CD8-positive, alpha-beta T cell (primary cell): ENCODE measurements at regions of chr16 and their contacts with region 1.

Region 1: DNA sequence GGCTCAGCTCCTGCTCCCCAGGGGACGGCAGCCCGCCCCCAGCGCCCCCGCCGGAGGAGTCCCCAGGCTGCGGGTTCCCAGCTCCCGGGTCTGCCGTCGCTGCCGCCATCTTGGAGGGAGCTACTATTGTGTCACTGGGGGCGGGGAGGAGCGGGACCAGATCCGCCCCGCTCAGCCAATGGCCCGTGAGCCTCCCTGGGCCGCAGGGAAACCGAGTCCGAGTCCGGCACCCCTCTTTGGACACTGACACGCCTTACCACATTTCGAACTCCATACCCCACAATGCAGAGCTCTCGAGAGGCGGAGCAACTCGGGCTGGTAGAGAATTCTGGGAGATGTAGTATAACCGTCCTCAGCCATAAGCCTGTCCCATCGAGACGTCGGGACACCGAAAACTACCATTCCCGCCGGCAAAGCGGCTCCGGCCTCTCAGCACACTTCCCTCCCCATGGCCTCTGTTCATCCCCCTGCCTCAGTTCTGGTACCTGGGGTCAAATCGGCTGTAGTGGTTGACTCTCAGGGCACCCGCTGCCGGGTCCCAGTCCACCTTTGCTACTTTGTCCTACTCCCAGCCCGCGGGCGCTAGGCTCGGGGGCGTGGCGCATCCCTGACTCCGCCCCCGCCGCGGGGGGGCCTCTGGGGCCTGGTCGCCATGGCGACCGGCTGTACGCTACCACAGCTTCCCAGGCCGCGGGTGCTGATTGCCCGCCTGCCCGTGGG is at the starts of genes RANBP10 and TSNAXIP1:
- DNase-seq: peak; percentile 92 to 99 (median 94)
- ATAC-seq: peak; percentile 91
- H3K4me3 ChIP-seq: peak within 1 kb of the TSS; percentile 89 to 96
- H3K4me3 Mint-ChIP-seq: peak within 1 kb of the TSS; percentile 95
- H3K27ac ChIP-seq: peak within 1 kb of the TSS; percentile 77 to 85
- H3K27ac Mint-ChIP-seq: peak within 1 kb of the TSS; percentile 91
- H3K4me1 ChIP-seq: peaks cover 35% of the 10 kb centered on the region
- H3K4me1 Mint-ChIP-seq: peaks cover 44% of the 10 kb centered on the region
- H3K27me3 ChIP-seq: no peaks in the 10 kb centered on the region
- H3K27me3 Mint-ChIP-seq: no peaks in the 10 kb centered on the region
- CTCF ChIP-seq: no peak
- total RNA-seq, gene RANBP10: 14.6 to 14.8 TPM
- total RNA-seq, gene TSNAXIP1: 0.31 to 0.41 TPM

Region 2: GRCh38 chr16:67660564-67661028 is 146.0 kb before region 1 on chr16 and contains the start of gene PARD6A:
- CTCF ChIA-PET with region 1: no interaction called
- POLR2A ChIA-PET with region 1: no interaction called
- intact Hi-C with region 1: loop called (anchors 1 kb)
- DNase-seq: peak; percentile 89 to 99 (median 95)
- ATAC-seq: peak; percentile 76
- H3K4me3 ChIP-seq: peak within 1 kb of the TSS; percentile 83 to 100
- H3K4me3 Mint-ChIP-seq: peak within 1 kb of the TSS; percentile 94
- H3K27ac ChIP-seq: peak within 1 kb of the TSS; percentile 92 to 100
- H3K27ac Mint-ChIP-seq: peak within 1 kb of the TSS; percentile 93
- H3K4me1 ChIP-seq: peaks cover 20% of the 10 kb centered on the region
- H3K4me1 Mint-ChIP-seq: peaks cover 23% of the 10 kb centered on the region
- H3K27me3 ChIP-seq: no peaks in the 10 kb centered on the region
- H3K27me3 Mint-ChIP-seq: no peaks in the 10 kb centered on the region
- CTCF ChIP-seq: no peak
- total RNA-seq, gene PARD6A: 3.0 to 3.1 TPM

Region 3: GRCh38 chr16:67833418-67834241 is 27.0 kb after region 1 on chr16:
- CTCF ChIA-PET with region 1: no interaction called
- POLR2A ChIA-PET with region 1: interaction called, 4 read pairs
- intact Hi-C with region 1: loop called (anchors 1 kb)
- DNase-seq: peak; percentile 84 to 96 (median 93)
- ATAC-seq: peak; percentile 99
- H3K4me3 ChIP-seq: peak overlapping the region; percentile 73 to 86
- H3K4me3 Mint-ChIP-seq: peak overlapping the region; percentile 94
- H3K27ac ChIP-seq: peak overlapping the region; percentile 52 to 59
- H3K27ac Mint-ChIP-seq: peak overlapping the region; percentile 77
- H3K4me1 ChIP-seq: peaks cover 17% of the 10 kb centered on the region
- H3K4me1 Mint-ChIP-seq: peaks cover 14% of the 10 kb centered on the region
- H3K27me3 ChIP-seq: no peaks in the 10 kb centered on the region
- H3K27me3 Mint-ChIP-seq: no peaks in the 10 kb centered on the region
- CTCF ChIP-seq: no peak

Region 4: GRCh38 chr16:67872786-67873537 is 66.4 kb after region 1 on chr16 and contains the start of gene EDC4:
- CTCF ChIA-PET with region 1: no interaction called
- POLR2A ChIA-PET with region 1: no interaction called
- intact Hi-C with region 1: loop called (anchors 1 to 2 kb)
- DNase-seq: peak; percentile 75 to 94 (median 86)
- ATAC-seq: peak; percentile 92
- H3K4me3 ChIP-seq: peak within 1 kb of the TSS; percentile 87 to 97
- H3K4me3 Mint-ChIP-seq: peak within 1 kb of the TSS; percentile 90
- H3K27ac ChIP-seq: peak within 1 kb of the TSS; percentile 78 to 83
- H3K27ac Mint-ChIP-seq: peak within 1 kb of the TSS; percentile 90
- H3K4me1 ChIP-seq: peaks cover 32% of the 10 kb centered on the region
- H3K4me1 Mint-ChIP-seq: peaks cover 32% of the 10 kb centered on the region
- H3K27me3 ChIP-seq: no peaks in the 10 kb centered on the region
- H3K27me3 Mint-ChIP-seq: no peaks in the 10 kb centered on the region
- CTCF ChIP-seq: no peak
- total RNA-seq, gene EDC4: 154 to 169 TPM

Region 5: GRCh38 chr16:68244903-68245853 is 438.6 kb after region 1 on chr16 and contains the start of gene PLA2G15:
- CTCF ChIA-PET with region 1: no interaction called
- POLR2A ChIA-PET with region 1: no interaction called
- intact Hi-C with region 1: loop called in 1 of 2 experiments (anchors 1 kb)
- DNase-seq: peak; percentile 94 to 98 (median 96)
- ATAC-seq: peak; percentile 99
- H3K4me3 ChIP-seq: peak within 1 kb of the TSS; percentile 88 to 91
- H3K4me3 Mint-ChIP-seq: peak within 1 kb of the TSS; percentile 98
- H3K27ac ChIP-seq: peak within 1 kb of the TSS in 1 of 2 experiments; percentile 38
- H3K27ac Mint-ChIP-seq: peak within 1 kb of the TSS; percentile 79
- H3K4me1 ChIP-seq: peaks cover 21% of the 10 kb centered on the region
- H3K4me1 Mint-ChIP-seq: peaks cover 26% of the 10 kb centered on the region
- H3K27me3 ChIP-seq: no peaks in the 10 kb centered on the region
- H3K27me3 Mint-ChIP-seq: no peaks in the 10 kb centered on the region
- CTCF ChIP-seq: no peak
- total RNA-seq, gene PLA2G15: 5.1 to 6.0 TPM